ENCODE measurements at regions of chr2 and their contacts with region 1.

Region 1: DNA sequence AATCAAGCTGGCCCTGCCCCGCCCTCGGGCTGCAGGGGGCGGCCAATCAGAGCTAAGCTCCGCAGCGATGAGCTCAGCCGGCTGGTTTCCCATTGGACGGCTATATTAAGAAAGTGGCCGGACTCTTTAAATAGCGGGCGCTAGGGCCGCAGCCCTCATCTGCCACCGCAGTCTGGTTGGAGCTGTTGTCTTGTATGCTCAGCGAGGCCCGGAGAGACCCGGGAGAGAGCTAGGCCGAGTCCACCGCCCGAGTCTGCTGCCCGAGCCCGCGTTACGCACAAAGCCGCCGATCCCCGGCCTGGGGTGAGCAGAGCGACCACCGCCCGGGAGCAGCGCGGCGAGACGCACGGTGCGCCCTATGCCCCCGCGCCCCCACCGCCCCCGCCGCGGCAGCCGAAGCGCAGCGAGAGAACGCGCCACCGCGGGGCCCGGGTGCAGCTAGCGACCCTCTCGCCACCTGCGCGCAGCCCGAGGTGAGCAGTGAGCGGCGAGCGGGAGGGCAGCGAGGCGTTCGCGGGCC is at the start of gene RHOB:
- DNase-seq: peak; percentile 98

Region 2: GRCh38 chr2:20040489-20041172 is 406.3 kb before region 1 on chr2:
- CTCF ChIA-PET with region 1: no interaction called
- POLR2A ChIA-PET with region 1: no interaction called
- DNase-seq: no peak

Region 3: DNA sequence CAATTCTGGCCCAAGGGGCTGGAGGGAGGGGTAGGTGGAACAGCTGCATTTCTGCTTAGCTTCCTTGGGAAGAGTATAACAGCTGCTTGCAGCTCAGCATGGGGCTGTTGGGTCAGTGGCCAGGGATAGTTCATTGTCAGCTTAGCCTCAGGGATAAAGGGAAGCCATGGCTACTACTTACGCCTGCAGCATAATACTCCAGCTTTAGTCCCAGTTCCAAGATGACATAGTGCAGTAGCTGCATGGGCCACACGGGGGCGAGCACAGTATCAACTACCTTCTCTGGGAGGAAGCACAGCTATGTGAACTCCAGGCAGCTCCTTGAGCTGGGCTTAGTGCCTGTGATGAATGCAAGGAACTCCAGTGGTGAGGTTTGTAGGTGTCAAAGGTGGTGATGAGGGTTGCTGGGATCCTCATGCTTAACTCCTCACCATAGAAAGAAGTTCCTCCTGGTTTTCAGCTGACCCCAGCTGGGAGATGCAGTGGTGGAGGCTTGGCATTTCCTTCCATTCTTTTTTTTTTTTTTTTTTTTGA is 35.5 kb before region 1 on chr2:
- CTCF ChIA-PET with region 1: interaction called, 6 read pairs
- POLR2A ChIA-PET with region 1: interaction called, 14 read pairs
- DNase-seq: peak; percentile 78

Region 4: DNA sequence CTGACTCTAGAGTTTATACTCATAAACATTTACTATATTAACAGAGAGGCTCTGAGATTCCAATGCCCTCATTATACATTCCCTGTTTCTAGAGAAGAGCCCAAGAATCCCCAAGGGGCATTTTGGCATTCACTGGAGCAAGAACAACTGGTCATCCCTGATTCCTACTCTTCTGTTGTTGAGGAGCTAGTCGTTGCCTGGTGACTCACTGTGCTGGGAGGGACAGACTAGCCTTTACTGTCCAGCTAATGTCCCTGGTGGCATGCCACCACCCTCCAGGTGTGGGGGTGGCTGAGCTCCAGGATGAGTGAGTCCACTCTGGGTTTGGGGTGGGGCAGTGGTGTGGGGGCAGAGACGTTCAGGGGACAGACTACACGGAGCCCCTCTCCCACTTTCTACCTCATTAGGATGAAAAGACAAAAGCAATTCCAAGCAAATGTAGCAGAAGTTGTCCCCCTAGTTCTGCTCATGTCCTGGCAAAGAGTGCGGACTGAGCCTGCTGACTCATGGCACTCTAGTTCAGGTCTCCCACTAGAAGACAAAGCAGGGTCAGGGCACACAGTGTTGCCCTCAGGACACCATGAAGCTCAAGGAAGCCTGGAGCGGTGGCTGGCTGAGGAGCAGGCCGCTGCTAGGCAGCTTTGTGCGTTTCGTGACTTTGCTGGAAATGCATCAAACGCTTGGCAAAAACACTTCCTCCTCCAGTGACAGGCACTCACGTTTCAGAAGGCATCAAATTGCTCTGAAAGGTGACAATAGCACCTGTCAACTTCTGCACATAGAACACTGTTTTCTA is 49.3 kb after region 1 on chr2:
- CTCF ChIA-PET with region 1: no interaction called
- POLR2A ChIA-PET with region 1: interaction called, 16 read pairs
- DNase-seq: no peak

Region 5: GRCh38 chr2:20578895-20579825 is 132.2 kb after region 1 on chr2:
- CTCF ChIA-PET with region 1: interaction called, 3 read pairs
- POLR2A ChIA-PET with region 1: interaction called, 44 read pairs
- DNase-seq: peak; percentile 40

Region 6: DNA sequence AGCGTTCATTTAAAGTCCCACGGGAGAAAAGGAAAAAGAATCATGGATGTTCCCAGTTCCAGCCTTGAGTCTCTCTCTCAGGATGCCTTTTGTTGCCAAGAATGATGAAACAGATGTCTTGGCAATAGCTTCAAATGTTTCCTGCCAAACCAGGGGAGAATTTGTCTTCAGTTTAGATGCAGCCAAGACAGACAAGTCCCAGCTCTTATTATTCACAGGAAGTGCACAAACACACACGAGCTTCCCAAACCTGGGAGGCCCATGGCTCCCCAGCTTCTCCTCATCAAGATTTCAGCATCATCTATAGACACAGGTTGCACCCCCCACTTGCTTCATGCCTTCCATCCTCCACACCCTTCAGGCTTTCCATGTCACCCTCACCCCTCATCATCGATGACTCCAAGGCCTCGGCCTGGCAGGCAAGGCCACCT is 158.0 kb after region 1 on chr2:
- CTCF ChIA-PET with region 1: interaction called, 4 read pairs
- POLR2A ChIA-PET with region 1: interaction called, 77 read pairs
- DNase-seq: no peak

Region 7: GRCh38 chr2:20642055-20642971 is 195.3 kb after region 1 on chr2:
- CTCF ChIA-PET with region 1: interaction called, 10 read pairs
- POLR2A ChIA-PET with region 1: interaction called, 99 read pairs
- DNase-seq: peak; percentile 86

Measured in HEK293T (cell line).